ENCODE measurements at regions of chr5 and their contacts with region 1.

Region 1: DNA sequence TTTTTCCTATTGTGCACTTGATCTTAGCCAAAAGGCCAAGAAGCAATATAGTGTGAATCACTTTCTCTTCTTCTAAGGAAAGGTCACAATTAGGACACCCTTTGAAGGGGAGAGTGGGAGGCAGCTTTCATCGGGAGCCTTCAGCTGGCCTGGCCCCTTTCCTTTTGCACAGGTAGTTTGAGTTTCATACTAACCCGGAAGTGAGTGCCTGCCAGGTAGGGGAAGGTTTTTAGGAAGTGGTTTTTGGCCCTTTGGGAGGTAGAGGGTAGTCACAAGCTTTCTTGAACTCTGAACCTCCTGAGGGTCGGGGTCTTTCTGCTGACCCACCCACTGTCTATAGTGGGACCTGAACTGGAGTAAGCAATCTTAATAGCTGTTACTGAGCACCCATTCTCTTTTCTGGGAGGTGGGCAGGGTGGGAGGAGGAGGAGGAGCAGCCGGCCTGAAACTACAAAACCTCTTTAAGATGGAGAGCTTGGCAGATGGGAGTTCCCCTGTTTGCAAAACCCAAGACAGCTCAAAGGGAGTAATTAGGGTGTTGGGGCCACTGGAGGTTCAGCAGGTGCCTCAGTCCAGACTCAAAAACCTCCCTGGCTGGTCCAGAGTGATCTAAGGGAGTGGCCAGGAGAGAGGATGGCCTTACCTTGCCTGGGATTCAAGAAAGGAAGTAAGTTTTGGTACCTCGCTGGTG is 6.0 kb downstream of the LARP1 start:
- DNase-seq: peak; percentile 47
- H3K4me3 Mint-ChIP-seq: peak overlapping the region; percentile 9
- H3K27ac Mint-ChIP-seq: peak overlapping the region; percentile 87
- H3K4me1 Mint-ChIP-seq: peaks cover 69% of the 10 kb centered on the region
- H3K27me3 Mint-ChIP-seq: no peaks in the 10 kb centered on the region

Region 2: DNA sequence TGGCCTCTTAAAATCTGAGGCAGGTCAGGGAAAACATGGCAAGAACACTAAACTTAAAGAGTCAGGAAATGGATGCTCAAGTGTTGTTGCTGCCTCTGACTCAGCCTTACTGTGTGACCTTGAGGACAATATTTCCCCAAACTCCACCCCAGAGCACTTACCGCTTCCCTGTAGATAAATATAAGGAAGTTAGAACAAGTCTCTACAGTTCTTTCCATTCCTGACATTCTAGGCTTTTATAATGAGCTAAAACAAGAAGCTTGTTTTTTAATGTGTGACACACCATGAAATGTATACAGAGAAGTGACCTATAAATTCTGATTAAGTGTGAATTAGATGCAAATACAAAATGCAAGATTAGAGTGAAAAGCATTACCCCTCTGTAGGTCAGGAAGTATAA is 1141.4 kb before region 1 on chr5:
- CTCF ChIA-PET with region 1: no interaction called
- intact Hi-C with region 1: no loop called
- DNase-seq: no peak
- H3K4me3 Mint-ChIP-seq: no peak overlapping the region
- H3K27ac Mint-ChIP-seq: no peak overlapping the region
- H3K4me1 Mint-ChIP-seq: no peaks in the 10 kb centered on the region
- H3K27me3 Mint-ChIP-seq: no peaks in the 10 kb centered on the region

Region 3: DNA sequence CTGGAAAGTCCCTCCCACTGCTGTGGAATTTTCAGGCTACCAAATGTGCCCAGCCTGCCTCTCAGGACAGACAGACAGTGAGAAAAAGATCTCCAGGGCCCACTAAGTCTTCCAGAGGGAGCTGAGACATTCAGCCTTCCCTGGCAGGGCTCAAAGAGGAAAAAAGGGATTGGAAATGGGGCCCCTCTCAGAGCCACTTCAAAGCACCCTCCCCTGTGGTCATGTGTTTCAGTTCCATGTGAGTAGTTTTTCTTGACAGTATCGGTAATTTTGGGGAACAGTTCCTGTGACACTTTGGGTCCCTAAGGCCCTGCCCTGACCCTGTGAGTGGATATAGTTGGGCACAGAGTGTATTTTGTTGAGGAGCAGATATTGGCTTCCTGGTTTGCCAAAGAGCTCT is 18.9 kb after region 1 on chr5:
- CTCF ChIA-PET with region 1: interaction called, 3 read pairs
- intact Hi-C with region 1: loop called (anchors 2 kb)
- DNase-seq: no peak
- H3K4me3 Mint-ChIP-seq: no peak overlapping the region
- H3K27ac Mint-ChIP-seq: peak overlapping the region; percentile 63
- H3K4me1 Mint-ChIP-seq: peaks cover 74% of the 10 kb centered on the region
- H3K27me3 Mint-ChIP-seq: no peaks in the 10 kb centered on the region

Measured in activated naive CD4-positive, alpha-beta T cell treated with anti-CD3 and anti-CD28 coated beads for 36 hours (primary cell).